GM10248 (cell line): ENCODE measurements at regions of chr14 and their contacts with region 1.

Region 1: GRCh38 chr14:80996049-80996901 is 40.9 kb downstream of the TSHR start:
- DNase-seq: peak; percentile 38
- CTCF ChIP-seq: peak; percentile 67

Region 2: GRCh38 chr14:81009346-81009745 is 13.1 kb after region 1 on chr14:
- CTCF ChIA-PET with region 1: interaction called, 11 read pairs
- POLR2A ChIA-PET with region 1: no interaction called
- DNase-seq: no peak
- CTCF ChIP-seq: no peak

Region 3: DNA sequence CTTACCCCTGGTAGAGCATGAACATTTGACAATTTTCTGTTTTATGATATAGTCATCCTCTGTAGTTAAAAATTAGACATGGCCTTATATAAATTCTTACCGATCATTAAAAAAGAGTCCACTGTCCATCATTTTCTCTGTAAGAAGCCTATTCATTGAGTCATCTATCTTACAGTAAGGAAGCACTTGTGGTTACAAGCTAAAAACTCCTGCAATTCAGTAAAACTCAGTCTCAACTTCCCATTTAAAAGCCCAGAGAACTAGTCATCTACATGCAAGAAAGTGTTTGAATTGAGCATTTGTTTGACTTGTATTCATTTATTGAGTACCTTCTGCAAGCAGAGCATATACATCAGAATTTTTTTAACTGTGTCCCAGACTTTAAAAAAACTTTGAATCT is 161.2 kb after region 1 on chr14:
- CTCF ChIA-PET with region 1: interaction called, 104 read pairs
- POLR2A ChIA-PET with region 1: no interaction called
- DNase-seq: no peak
- CTCF ChIP-seq: no peak